Right cardiac atrium (tissue), 5 donors: ENCODE measurements at regions of chr14 and their contacts with region 1.

Region 1: GRCh38 chr14:68663385-68664076 is 129.3 kb downstream of the ZFP36L1 start:
- DNase-seq: no peak
- ATAC-seq: no peak
- H3K4me3 ChIP-seq: no peak overlapping the region
- H3K27ac ChIP-seq: no peak overlapping the region
- H3K4me1 ChIP-seq: peaks cover 12% of the 10 kb centered on the region
- H3K27me3 ChIP-seq: no peaks in the 10 kb centered on the region

Region 2: DNA sequence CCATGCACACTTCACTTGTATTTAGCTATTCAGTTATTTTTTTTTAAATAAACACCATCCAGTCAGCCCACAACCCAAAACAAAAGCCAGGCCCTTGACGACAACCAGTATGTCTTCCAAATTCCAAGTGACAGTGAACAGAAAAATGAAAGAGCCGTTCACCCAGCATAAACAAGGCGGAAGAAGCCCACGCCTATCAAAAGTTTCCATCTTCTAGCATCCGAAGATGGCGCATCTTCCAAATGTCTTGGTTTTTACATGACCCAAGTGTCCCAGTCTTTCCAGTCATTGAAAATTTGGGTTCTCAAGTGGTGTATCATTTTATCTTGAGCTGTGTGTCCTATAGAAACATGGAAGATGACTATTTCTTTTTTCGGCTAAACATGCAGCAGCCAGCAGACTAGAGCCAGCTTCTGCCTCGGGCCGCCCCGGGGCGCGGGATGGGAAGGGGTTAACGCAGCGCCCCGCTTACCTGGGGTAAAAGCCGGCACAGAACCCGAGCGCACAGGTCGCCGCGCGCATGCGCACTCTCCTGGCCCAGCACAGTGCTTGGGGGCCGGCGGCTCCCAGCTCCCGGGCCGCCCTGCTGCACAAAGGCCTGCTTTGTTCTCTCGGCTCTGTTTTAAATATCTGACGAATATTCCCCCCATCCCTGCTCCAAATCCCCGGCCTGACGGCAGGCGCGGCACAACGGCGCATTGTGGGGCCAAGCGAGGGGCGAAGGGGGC is 35.5 kb before region 1 on chr14:
- intact Hi-C with region 1: loop called in 1 of 4 experiments (anchors 5 kb)
- DNase-seq: peak; percentile 81 to 93 (median 90)
- ATAC-seq: peak; percentile 69 to 73
- H3K4me3 ChIP-seq: peak overlapping the region; percentile 13
- H3K27ac ChIP-seq: peak overlapping the region; percentile 46
- H3K4me1 ChIP-seq: peaks cover 22% of the 10 kb centered on the region
- H3K27me3 ChIP-seq: no peaks in the 10 kb centered on the region